Psoas muscle (tissue), 8 donors: ENCODE measurements at regions of chr14 and their contacts with region 1.

Region 1: DNA sequence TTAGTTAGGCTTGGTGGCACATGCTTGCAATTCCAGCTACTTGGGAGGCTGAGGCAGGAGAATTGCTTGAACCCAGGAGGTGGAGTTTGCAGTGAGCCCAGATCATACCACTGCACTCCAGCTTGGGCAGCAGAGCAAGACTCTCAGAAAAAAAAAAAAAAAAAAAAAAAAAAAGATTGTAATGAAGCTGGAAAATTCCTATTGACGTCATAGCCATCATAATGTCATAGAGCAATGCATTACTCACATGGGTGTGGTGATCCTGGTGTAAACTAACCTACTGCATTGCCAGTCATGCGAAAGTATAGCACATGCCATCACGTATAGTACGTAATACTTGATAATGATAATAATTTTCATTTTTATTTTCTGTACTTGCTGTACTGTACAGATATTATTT is 42.7 kb upstream of the NID2 start:
- DNase-seq: no peak
- ATAC-seq: no peak
- H3K4me3 ChIP-seq: no peak overlapping the region
- H3K27ac ChIP-seq: no peak overlapping the region
- H3K4me1 ChIP-seq: no peaks in the 10 kb centered on the region
- H3K27me3 ChIP-seq: no peaks in the 10 kb centered on the region
- CTCF ChIP-seq: no peak

Region 2: GRCh38 chr14:52046376-52046917 is 65.1 kb before region 1 on chr14:
- intact Hi-C with region 1: loop called in 1 of 2 experiments (anchors 2 kb)
- DNase-seq: no peak
- ATAC-seq: no peak
- H3K4me3 ChIP-seq: no peak overlapping the region
- H3K27ac ChIP-seq: no peak overlapping the region
- H3K4me1 ChIP-seq: peaks cover 4% of the 10 kb centered on the region
- H3K27me3 ChIP-seq: no peaks in the 10 kb centered on the region
- CTCF ChIP-seq: no peak

Region 3: DNA sequence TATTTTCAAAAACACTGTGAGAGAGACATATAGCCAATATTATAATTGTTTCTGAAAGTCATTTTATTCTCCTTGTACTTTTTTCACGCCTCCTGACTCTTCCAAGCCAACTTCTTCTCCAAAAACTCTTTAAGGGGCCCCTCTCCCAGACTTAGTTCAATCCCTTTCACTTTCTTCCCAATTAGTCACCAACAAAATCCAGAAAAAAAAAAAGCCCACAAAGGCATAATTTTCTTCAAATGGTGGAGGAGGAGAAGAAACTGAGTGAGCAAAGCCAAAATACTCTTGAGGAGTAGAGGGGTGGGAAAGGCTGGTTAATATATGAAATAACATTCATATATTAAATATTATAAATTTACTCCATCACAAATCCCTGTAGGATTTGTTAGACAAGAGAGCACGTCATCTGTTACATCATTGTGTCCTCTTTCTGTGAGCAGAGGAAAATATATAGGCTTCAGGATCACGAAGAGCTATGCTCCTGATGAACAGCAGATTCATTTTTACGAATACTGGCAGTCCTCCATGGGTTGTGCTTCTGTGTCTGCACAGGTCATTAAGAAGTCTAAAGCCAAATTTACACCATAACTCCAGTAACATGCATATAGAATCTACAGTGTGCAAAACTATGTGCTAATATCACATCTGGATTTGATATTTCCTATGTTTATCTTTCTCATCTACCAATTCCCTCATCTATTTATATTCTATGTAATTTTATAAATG is 16.9 kb before region 1 on chr14:
- intact Hi-C with region 1: no loop called
- DNase-seq: no peak
- ATAC-seq: no peak
- H3K4me3 ChIP-seq: no peak overlapping the region
- H3K27ac ChIP-seq: no peak overlapping the region
- H3K4me1 ChIP-seq: no peaks in the 10 kb centered on the region
- H3K27me3 ChIP-seq: no peaks in the 10 kb centered on the region
- CTCF ChIP-seq: no peak